Posterior vena cava (tissue), 2 donors: ENCODE measurements at regions of chr14 and their contacts with region 1.

Region 1: DNA sequence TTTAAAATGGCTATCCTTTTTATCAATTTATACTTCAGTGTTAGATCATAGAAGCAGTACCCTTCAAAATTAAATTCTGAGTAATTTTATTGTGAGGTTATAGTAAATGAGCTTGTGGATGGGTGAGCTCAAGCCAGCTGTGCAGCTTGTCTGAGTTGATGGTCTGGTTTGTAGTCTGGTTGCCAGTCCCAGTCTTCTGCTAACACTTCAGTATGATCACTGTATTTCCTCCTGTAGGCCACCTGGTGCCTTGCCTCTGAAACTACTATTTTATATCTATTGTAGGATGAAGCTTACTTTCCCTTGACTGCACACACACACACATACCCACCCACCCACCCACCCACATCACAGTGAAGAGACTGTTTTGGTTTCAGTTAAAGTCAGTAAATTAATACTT is 496.4 kb downstream of the PCNX1 start:
- DNase-seq: no peak

Region 2: DNA sequence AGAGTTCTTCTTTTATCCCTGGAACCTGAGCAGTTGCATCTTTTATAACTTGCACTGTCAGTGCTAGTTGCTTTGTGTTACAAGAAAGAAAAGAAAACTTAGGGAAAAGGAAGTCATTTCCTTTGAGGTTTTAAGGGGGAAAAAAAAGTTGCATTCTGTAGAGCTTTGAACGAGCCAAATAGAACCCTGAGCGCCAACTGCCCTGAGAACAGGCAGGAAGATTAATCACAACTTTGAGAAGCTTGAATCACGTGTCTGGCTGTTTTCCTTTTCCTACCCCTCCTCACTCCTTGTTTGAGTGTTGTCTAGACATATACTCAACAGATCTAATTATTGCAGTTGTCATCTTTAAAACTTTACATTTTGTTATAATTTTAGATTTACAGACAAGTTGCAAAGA is 483.9 kb before region 1 on chr14:
- intact Hi-C with region 1: no loop called
- DNase-seq: no peak

Region 3: GRCh38 chr14:71339650-71340415 is 63.8 kb before region 1 on chr14:
- intact Hi-C with region 1: loop called in 1 of 2 experiments (anchors 10 kb)
- DNase-seq: no peak